HepG2 (cell line): ENCODE measurements at regions of chr4 and their contacts with region 1.

Region 1: DNA sequence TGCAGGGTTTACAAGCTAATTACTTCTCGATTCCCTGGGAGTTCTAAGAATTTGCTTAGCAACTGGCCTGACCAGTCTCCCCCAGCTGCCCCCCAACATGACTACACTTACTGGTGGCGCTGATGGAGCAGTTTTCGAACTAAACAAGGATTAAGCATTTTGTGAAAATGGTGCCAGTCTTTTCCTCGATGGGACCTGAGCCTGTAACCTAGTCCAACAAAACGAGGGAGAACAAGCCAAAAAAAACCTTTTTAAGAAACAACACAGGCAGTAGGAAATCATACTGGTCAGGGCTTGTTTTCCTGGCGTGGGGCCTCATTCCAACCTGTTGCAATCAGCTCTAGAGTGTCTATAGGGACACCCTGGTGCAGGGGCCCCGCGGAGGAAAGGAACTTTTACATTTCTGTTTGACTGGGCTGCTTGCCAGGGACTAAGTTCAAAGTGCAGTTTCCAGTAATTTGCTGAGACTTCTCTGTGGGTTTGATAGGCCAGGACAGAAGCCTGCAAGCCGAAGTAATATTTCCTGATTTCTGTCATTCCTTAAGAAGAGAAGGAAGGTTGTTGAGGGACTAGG is 158.7 kb downstream of the SPRY1 start:
- DNase-seq: peak; percentile 98
- ATAC-seq: peak; percentile 97
- H3K4me3 ChIP-seq: peak overlapping the region; percentile 25 to 54 (median 39); a peak in 5 of 6 replicates
- H3K27ac ChIP-seq: peak overlapping the region; percentile 98
- H3K4me1 ChIP-seq: peaks cover 76% of the 10 kb centered on the region
- H3K27me3 ChIP-seq: no peaks in the 10 kb centered on the region
- CTCF ChIP-seq: peak; percentile 8; the same call in 1 of the 2 replicates
- EP300 ChIP-seq: peak; percentile 72 to 99
- POLR2A ChIP-seq: peak in 1 of 2 experiments; percentile 59; a peak in 2 of 4 replicates
- RAD21 ChIP-seq: peak; percentile 50; the same call in 1 of the 2 replicates

Region 2: DNA sequence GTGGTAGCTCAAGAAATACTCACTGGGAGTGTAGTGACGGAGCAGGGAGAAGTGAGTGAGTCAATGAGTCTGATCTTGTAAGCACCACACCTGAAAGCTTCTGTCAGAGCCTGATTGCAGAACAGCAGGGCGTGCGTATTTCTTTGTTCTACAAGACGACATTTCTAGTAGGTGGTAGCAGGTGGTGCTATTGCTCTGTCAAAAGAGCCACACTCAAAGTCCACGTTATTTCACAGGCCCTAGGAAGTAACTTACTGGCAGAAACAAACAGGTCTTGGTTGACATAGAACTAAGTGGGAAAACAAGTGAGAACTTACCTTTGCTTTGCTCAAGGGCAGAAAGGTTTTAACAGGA is 205.2 kb before region 1 on chr4:
- CTCF ChIA-PET with region 1: no interaction called
- POLR2A ChIA-PET with region 1: interaction called, 5 read pairs
- in situ Hi-C with region 1: no loop called
- intact Hi-C with region 1: loop called (anchors 5 kb)
- DNase-seq: peak; percentile 81
- ATAC-seq: peak; percentile 91
- H3K4me3 ChIP-seq: peak overlapping the region in 1 of 3 experiments; percentile 15; a peak in 1 of 6 replicates
- H3K27ac ChIP-seq: no peak overlapping the region
- H3K4me1 ChIP-seq: peaks cover 48% of the 10 kb centered on the region
- H3K27me3 ChIP-seq: no peaks in the 10 kb centered on the region
- CTCF ChIP-seq: peak; percentile 78
- EP300 ChIP-seq: 0 out of 4 replicates have a peak, but pooled peaks of 1 of the 2 experiments have one; percentile 33
- POLR2A ChIP-seq: no peak
- RAD21 ChIP-seq: peak; percentile 47

Region 3: GRCh38 chr4:123418351-123418931 is 136.9 kb before region 1 on chr4:
- CTCF ChIA-PET with region 1: no interaction called
- POLR2A ChIA-PET with region 1: interaction called, 4 read pairs
- in situ Hi-C with region 1: no loop called
- intact Hi-C with region 1: loop called (anchors 5 kb)
- DNase-seq: peak; percentile 97
- ATAC-seq: peak; percentile 97
- H3K4me3 ChIP-seq: peak overlapping the region in 2 of 3 experiments; percentile 6 to 30; a peak in 2 of 6 replicates
- H3K27ac ChIP-seq: peak overlapping the region; percentile 70
- H3K4me1 ChIP-seq: peaks cover 72% of the 10 kb centered on the region
- H3K27me3 ChIP-seq: no peaks in the 10 kb centered on the region
- CTCF ChIP-seq: no peak
- EP300 ChIP-seq: peak in 1 of 2 experiments; percentile 95; a peak in 2 of 4 replicates
- POLR2A ChIP-seq: no peak
- RAD21 ChIP-seq: peak; percentile 21; the same call in 1 of the 2 replicates

Region 4: GRCh38 chr4:123524958-123525628 is 30.2 kb before region 1 on chr4:
- CTCF ChIA-PET with region 1: no interaction called
- POLR2A ChIA-PET with region 1: interaction called, 16 read pairs
- in situ Hi-C with region 1: no loop called
- intact Hi-C with region 1: no loop called
- DNase-seq: peak; percentile 76
- ATAC-seq: peak; percentile 83
- H3K4me3 ChIP-seq: no peak overlapping the region
- H3K27ac ChIP-seq: peak overlapping the region; percentile 24
- H3K4me1 ChIP-seq: peaks cover 38% of the 10 kb centered on the region
- H3K27me3 ChIP-seq: no peaks in the 10 kb centered on the region
- CTCF ChIP-seq: no peak
- EP300 ChIP-seq: peak in 1 of 2 experiments; percentile 68; a peak in 2 of 4 replicates
- POLR2A ChIP-seq: no peak
- RAD21 ChIP-seq: no peak

Region 5: GRCh38 chr4:123588631-123589241 is 33.4 kb after region 1 on chr4:
- CTCF ChIA-PET with region 1: no interaction called
- POLR2A ChIA-PET with region 1: interaction called, 13 read pairs
- in situ Hi-C with region 1: no loop called
- intact Hi-C with region 1: no loop called
- DNase-seq: peak; percentile 86
- ATAC-seq: peak; percentile 87
- H3K4me3 ChIP-seq: no peak overlapping the region
- H3K27ac ChIP-seq: no peak overlapping the region
- H3K4me1 ChIP-seq: peaks cover 29% of the 10 kb centered on the region
- H3K27me3 ChIP-seq: no peaks in the 10 kb centered on the region
- CTCF ChIP-seq: no peak
- EP300 ChIP-seq: no peak
- POLR2A ChIP-seq: no peak
- RAD21 ChIP-seq: no peak

Region 6: GRCh38 chr4:123599920-123600810 is 44.8 kb after region 1 on chr4:
- CTCF ChIA-PET with region 1: no interaction called
- POLR2A ChIA-PET with region 1: interaction called, 4 read pairs
- in situ Hi-C with region 1: no loop called
- intact Hi-C with region 1: loop called (anchors 2 kb)
- DNase-seq: peak; percentile 98
- ATAC-seq: peak; percentile 92
- H3K4me3 ChIP-seq: peak overlapping the region in 2 of 3 experiments; percentile 34 to 42; a peak in 2 of 6 replicates
- H3K27ac ChIP-seq: peak overlapping the region; percentile 78
- H3K4me1 ChIP-seq: peaks cover 42% of the 10 kb centered on the region
- H3K27me3 ChIP-seq: no peaks in the 10 kb centered on the region
- CTCF ChIP-seq: 0 out of 2 replicates have a peak, but pooled peaks have one; percentile 15
- EP300 ChIP-seq: peak; percentile 83 to 96; a peak in 3 of 4 replicates
- POLR2A ChIP-seq: peak in 1 of 2 experiments; percentile 69; a peak in 2 of 4 replicates
- RAD21 ChIP-seq: no peak

Region 7: GRCh38 chr4:123649645-123650391 is 94.5 kb after region 1 on chr4:
- CTCF ChIA-PET with region 1: no interaction called
- POLR2A ChIA-PET with region 1: interaction called, 12 read pairs
- in situ Hi-C with region 1: no loop called
- intact Hi-C with region 1: no loop called
- DNase-seq: peak; percentile 92
- ATAC-seq: peak; percentile 97
- H3K4me3 ChIP-seq: peak overlapping the region; percentile 23 to 60 (median 47); a peak in 4 of 6 replicates
- H3K27ac ChIP-seq: peak overlapping the region; percentile 92
- H3K4me1 ChIP-seq: peaks cover 60% of the 10 kb centered on the region
- H3K27me3 ChIP-seq: no peaks in the 10 kb centered on the region
- CTCF ChIP-seq: no peak
- EP300 ChIP-seq: peak; percentile 58 to 73
- POLR2A ChIP-seq: peak; percentile 45 to 92; a peak in 3 of 4 replicates
- RAD21 ChIP-seq: no peak

Region 8: GRCh38 chr4:123741906-123742305 is 186.6 kb after region 1 on chr4:
- CTCF ChIA-PET with region 1: no interaction called
- POLR2A ChIA-PET with region 1: no interaction called
- in situ Hi-C with region 1: no loop called
- intact Hi-C with region 1: no loop called
- DNase-seq: no peak
- ATAC-seq: no peak
- H3K4me3 ChIP-seq: no peak overlapping the region
- H3K27ac ChIP-seq: no peak overlapping the region
- H3K4me1 ChIP-seq: peaks cover 5% of the 10 kb centered on the region; the same call in 1 of the 2 replicates
- H3K27me3 ChIP-seq: no peaks in the 10 kb centered on the region
- CTCF ChIP-seq: no peak
- EP300 ChIP-seq: no peak
- POLR2A ChIP-seq: no peak
- RAD21 ChIP-seq: no peak